MCF 10A (cell line): ENCODE measurements at regions of chr15 and their contacts with region 1.

Region 1: DNA sequence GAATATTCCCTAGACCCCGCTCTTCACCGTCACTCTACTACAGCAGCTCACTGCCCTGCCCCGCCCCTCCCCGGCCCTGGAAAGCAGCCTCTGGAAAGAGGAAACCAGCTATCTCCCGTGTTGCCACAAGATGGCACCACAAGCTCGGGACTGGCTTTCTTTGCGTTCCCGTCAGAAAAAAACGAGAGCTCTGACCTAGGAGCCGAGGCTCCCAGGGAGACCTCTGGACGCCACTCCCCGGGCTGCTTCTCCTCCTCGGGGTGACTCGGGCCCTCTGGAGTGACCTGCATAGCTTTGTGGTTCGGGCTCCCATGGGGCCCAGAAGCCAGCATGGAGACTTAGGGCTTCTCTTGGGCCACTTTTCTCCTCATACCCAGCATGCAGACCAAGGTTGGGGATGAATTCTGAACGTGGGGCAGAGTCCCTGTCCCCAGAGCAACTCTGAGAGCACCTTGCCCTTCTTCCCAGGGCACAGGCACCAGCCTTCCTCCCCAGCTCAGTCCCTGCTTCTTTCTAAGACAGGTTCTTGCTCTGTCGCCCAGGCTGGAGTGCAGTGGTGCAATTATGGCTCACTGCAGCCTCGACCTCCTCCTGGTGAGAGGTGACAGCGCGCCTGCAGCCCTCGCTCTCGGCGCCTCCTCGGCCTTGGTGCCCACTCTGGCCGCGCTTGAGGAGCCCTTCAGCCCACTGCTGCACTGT is 19.0 kb downstream of the STOML1 start:
- DNase-seq: peak; percentile 90
- H3K4me3 Mint-ChIP-seq: no peak overlapping the region
- H3K27ac Mint-ChIP-seq: no peak overlapping the region
- H3K4me1 Mint-ChIP-seq: peaks cover 12% of the 10 kb centered on the region
- H3K27me3 Mint-ChIP-seq: no peaks in the 10 kb centered on the region
- CTCF ChIP-seq: peak; percentile 89

Region 2: GRCh38 chr15:73885954-73886700 is 87.0 kb before region 1 on chr15:
- CTCF ChIA-PET with region 1: no interaction called
- POLR2A ChIA-PET with region 1: no interaction called
- intact Hi-C with region 1: no loop called
- DNase-seq: no peak
- H3K4me3 Mint-ChIP-seq: no peak overlapping the region
- H3K27ac Mint-ChIP-seq: no peak overlapping the region
- H3K4me1 Mint-ChIP-seq: no peaks in the 10 kb centered on the region
- H3K27me3 Mint-ChIP-seq: peaks cover 72% of the 10 kb centered on the region
- CTCF ChIP-seq: no peak

Region 3: GRCh38 chr15:73991726-73992593 is 18.8 kb after region 1 on chr15 and contains the start of gene STOML1:
- CTCF ChIA-PET with region 1: interaction called, 31 read pairs
- POLR2A ChIA-PET with region 1: interaction called, 27 read pairs
- intact Hi-C with region 1: no loop called
- DNase-seq: peak; percentile 91
- H3K4me3 Mint-ChIP-seq: peak within 1 kb of the TSS; percentile 76
- H3K27ac Mint-ChIP-seq: peak within 1 kb of the TSS; percentile 78
- H3K4me1 Mint-ChIP-seq: peaks cover 52% of the 10 kb centered on the region
- H3K27me3 Mint-ChIP-seq: no peaks in the 10 kb centered on the region
- CTCF ChIP-seq: peak; percentile 95
- total RNA-seq, gene STOML1: 12.0 and 17.6 TPM in 2 replicates

Region 4: GRCh38 chr15:74036271-74037170 is 63.4 kb after region 1 on chr15:
- CTCF ChIA-PET with region 1: interaction called, 102 read pairs
- POLR2A ChIA-PET with region 1: interaction called, 7 read pairs
- intact Hi-C with region 1: loop called (anchors 1 kb)
- DNase-seq: peak; percentile 56
- H3K4me3 Mint-ChIP-seq: no peak overlapping the region
- H3K27ac Mint-ChIP-seq: peak overlapping the region; percentile 32
- H3K4me1 Mint-ChIP-seq: peaks cover 19% of the 10 kb centered on the region
- H3K27me3 Mint-ChIP-seq: no peaks in the 10 kb centered on the region
- CTCF ChIP-seq: peak; percentile 44

Region 5: GRCh38 chr15:74053941-74054529 is 80.9 kb after region 1 on chr15:
- CTCF ChIA-PET with region 1: interaction called, 54 read pairs
- POLR2A ChIA-PET with region 1: no interaction called
- intact Hi-C with region 1: no loop called
- DNase-seq: peak; percentile 75
- H3K4me3 Mint-ChIP-seq: no peak overlapping the region
- H3K27ac Mint-ChIP-seq: no peak overlapping the region
- H3K4me1 Mint-ChIP-seq: peaks cover 33% of the 10 kb centered on the region
- H3K27me3 Mint-ChIP-seq: no peaks in the 10 kb centered on the region
- CTCF ChIP-seq: peak; percentile 71

Region 6: DNA sequence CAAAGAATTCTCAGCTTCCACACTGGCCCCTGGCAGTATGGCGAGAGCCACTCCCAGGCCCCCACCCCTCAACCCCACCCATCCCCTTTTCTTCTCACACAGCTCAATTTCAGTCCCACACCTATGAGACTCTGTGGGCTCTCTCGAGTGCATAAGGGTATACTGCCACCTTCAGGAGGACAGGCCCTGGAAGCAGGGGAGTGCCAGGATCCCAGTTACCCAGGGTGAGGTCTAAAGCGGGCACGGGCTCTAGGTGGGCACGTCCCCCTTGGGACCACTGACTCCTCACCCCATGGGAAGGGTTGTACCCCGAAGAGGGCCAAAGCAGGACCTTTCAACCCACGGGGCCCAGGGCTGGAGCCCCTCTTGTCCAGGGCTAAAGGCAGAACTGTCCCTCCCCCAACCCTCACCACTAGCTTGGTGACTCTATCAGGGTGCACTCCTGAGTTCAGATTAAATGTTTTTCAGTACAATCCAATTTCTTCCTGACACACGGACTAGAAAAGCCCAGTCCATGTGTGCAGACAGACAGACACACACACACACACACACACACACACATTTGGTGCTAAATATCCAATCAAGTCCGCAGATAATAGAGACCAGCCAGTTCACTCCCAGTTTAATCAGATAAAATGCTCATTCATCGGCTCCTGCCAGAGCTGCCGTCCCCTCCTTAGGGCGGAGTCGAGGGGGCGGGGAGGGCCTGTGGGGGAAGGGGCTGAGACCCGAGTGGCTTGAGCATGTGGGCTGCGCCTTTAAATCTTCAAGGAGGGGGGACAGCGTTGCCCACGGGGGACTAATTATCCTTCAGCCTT is 334.9 kb after region 1 on chr15:
- CTCF ChIA-PET with region 1: interaction called, 21 read pairs
- POLR2A ChIA-PET with region 1: interaction called, 4 read pairs
- intact Hi-C with region 1: loop called (anchors 2 kb)
- DNase-seq: peak; percentile 77
- H3K4me3 Mint-ChIP-seq: no peak overlapping the region
- H3K27ac Mint-ChIP-seq: no peak overlapping the region
- H3K4me1 Mint-ChIP-seq: peaks cover 5% of the 10 kb centered on the region
- H3K27me3 Mint-ChIP-seq: peaks cover 60% of the 10 kb centered on the region
- CTCF ChIP-seq: peak; percentile 73